ENCODE measurements at regions of chr19 and their contacts with region 1.

Region 1: GRCh38 chr19:41641879-41642485 is 15.1 kb upstream of the CEACAM4 start:
- DNase-seq: peak; percentile 4
- ATAC-seq: peak; percentile 88
- H3K4me3 ChIP-seq: no peak overlapping the region
- H3K27ac ChIP-seq: no peak overlapping the region
- H3K4me1 ChIP-seq: no peaks in the 10 kb centered on the region
- H3K27me3 ChIP-seq: no peaks in the 10 kb centered on the region; a peak in 2 of 4 replicates
- CTCF ChIP-seq: peak; percentile 86 to 94 (median 93)
- EP300 ChIP-seq: no peak
- POLR2A ChIP-seq: no peak
- RAD21 ChIP-seq: peak; percentile 82

Region 2: GRCh38 chr19:41657157-41657556 is 15.2 kb after region 1 on chr19:
- CTCF ChIA-PET with region 1: interaction called, 13 read pairs
- POLR2A ChIA-PET with region 1: no interaction called
- RAD21 ChIA-PET with region 1: interaction called, 8 read pairs
- SMC1A ChIA-PET with region 1: no interaction called
- in situ Hi-C with region 1: no loop called
- intact Hi-C with region 1: no loop called
- DNase-seq: no peak
- ATAC-seq: no peak
- H3K4me3 ChIP-seq: no peak overlapping the region
- H3K27ac ChIP-seq: no peak overlapping the region
- H3K4me1 ChIP-seq: no peaks in the 10 kb centered on the region; the same call in 1 of the 2 replicates
- H3K27me3 ChIP-seq: no peaks in the 10 kb centered on the region
- CTCF ChIP-seq: no peak
- EP300 ChIP-seq: no peak
- POLR2A ChIP-seq: no peak
- RAD21 ChIP-seq: no peak

Region 3: DNA sequence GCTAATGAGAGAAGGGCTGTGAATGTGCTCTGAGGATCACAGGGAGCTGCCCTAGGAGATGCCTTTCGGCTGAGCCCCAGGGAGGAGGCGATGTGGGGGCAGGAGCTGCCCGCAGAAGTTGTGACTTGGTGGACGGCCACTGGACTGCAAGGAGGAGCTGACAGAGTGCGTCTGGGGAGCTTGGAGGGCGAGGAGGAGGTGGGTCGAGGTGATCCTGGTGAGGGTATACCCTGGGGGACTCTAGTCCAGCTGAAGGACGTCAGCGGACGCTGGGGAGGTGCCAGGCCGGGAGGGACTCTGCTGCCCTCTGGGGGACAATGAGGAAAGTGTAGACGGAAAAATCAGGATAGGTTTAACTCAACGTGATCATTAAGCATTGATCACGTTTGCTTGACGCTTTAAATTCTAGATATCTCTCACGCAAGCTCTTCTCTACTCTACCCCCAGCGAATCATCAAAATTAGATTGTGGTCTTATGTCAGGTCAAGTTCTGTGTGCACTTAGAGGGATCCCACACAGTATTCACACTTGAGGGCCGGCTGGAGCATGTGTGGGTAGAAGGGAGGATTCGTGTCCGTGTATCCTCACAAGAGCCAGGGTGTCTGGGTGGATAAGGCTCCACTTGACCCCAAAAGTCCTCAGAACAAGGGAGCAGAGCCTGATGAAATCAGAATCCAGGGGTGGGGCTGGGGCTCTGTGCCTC is 49.4 kb after region 1 on chr19:
- CTCF ChIA-PET with region 1: interaction called, 72 read pairs
- POLR2A ChIA-PET with region 1: no interaction called
- RAD21 ChIA-PET with region 1: interaction called, 9 read pairs
- SMC1A ChIA-PET with region 1: interaction called, 25 read pairs
- in situ Hi-C with region 1: loop called (anchors 5 kb)
- intact Hi-C with region 1: loop called (anchors 2 kb)
- DNase-seq: no peak
- ATAC-seq: peak; percentile 60
- H3K4me3 ChIP-seq: no peak overlapping the region
- H3K27ac ChIP-seq: no peak overlapping the region
- H3K4me1 ChIP-seq: no peaks in the 10 kb centered on the region
- H3K27me3 ChIP-seq: peaks cover 0 to under 1% of the 10 kb centered on the region in 2 experiments; a peak in 2 of 4 replicates
- CTCF ChIP-seq: peak; percentile 59 to 75 (median 72)
- EP300 ChIP-seq: no peak
- POLR2A ChIP-seq: no peak
- RAD21 ChIP-seq: peak; percentile 24; the same call in 1 of the 2 replicates

Region 4: DNA sequence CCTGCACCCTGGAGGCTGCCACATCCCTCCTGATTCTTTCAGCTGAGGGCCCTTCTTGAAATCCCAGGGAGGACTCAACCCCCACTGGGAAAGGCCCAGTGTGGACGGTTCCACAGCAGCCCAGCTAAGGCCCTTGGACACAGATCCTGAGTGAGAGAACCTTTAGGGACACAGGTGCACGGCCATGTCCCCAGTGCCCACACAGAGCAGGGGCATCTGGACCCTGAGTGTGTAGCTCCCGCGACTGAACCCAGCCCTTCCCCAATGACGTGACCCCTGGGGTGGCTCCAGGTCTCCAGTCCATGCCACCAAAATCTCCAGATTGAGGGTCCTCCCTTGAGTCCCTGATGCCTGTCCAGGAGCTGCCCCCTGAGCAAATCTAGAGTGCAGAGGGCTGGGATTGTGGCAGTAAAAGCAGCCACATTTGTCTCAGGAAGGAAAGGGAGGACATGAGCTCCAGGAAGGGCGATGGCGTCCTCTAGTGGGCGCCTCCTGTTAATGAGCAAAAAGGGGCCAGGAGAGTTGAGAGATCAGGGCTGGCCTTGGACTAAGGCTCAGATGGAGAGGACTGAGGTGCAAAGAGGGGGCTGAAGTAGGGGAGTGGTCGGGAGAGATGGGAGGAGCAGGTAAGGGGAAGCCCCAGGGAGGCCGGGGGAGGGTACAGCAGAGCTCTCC is 59.6 kb after region 1 on chr19:
- CTCF ChIA-PET with region 1: interaction called, 37 read pairs
- POLR2A ChIA-PET with region 1: no interaction called
- RAD21 ChIA-PET with region 1: interaction called, 3 read pairs
- SMC1A ChIA-PET with region 1: interaction called, 6 read pairs
- in situ Hi-C with region 1: no loop called
- intact Hi-C with region 1: loop called (anchors 2 kb)
- DNase-seq: no peak
- ATAC-seq: no peak
- H3K4me3 ChIP-seq: no peak overlapping the region
- H3K27ac ChIP-seq: no peak overlapping the region
- H3K4me1 ChIP-seq: no peaks in the 10 kb centered on the region
- H3K27me3 ChIP-seq: peaks cover 2 to 3% of the 10 kb centered on the region in 2 experiments; a peak in 3 of 4 replicates
- CTCF ChIP-seq: peak; percentile 45 to 52 (median 51); a peak in 4 of 6 replicates
- EP300 ChIP-seq: no peak
- POLR2A ChIP-seq: no peak
- RAD21 ChIP-seq: peak; percentile 42

Region 5: GRCh38 chr19:41706741-41707501 is 64.9 kb after region 1 on chr19:
- CTCF ChIA-PET with region 1: interaction called, 37 read pairs
- POLR2A ChIA-PET with region 1: no interaction called
- RAD21 ChIA-PET with region 1: interaction called, 3 read pairs
- SMC1A ChIA-PET with region 1: interaction called, 4 read pairs
- in situ Hi-C with region 1: no loop called
- intact Hi-C with region 1: no loop called
- DNase-seq: peak; percentile 3
- ATAC-seq: peak; percentile 98
- H3K4me3 ChIP-seq: no peak overlapping the region
- H3K27ac ChIP-seq: no peak overlapping the region
- H3K4me1 ChIP-seq: no peaks in the 10 kb centered on the region
- H3K27me3 ChIP-seq: peaks cover 3% of the 10 kb centered on the region in 2 experiments
- CTCF ChIP-seq: peak; percentile 51 to 93 (median 58); a peak in 5 of 6 replicates
- EP300 ChIP-seq: no peak
- POLR2A ChIP-seq: no peak
- RAD21 ChIP-seq: no peak

Region 6: GRCh38 chr19:41746593-41747227 is 104.7 kb after region 1 on chr19:
- CTCF ChIA-PET with region 1: interaction called, 25 read pairs
- POLR2A ChIA-PET with region 1: no interaction called
- RAD21 ChIA-PET with region 1: no interaction called
- SMC1A ChIA-PET with region 1: no interaction called
- in situ Hi-C with region 1: no loop called
- intact Hi-C with region 1: loop called (anchors 2 kb)
- DNase-seq: no peak
- ATAC-seq: peak; percentile 87
- H3K4me3 ChIP-seq: no peak overlapping the region
- H3K27ac ChIP-seq: no peak overlapping the region
- H3K4me1 ChIP-seq: no peaks in the 10 kb centered on the region
- H3K27me3 ChIP-seq: peaks cover 0 to 8% of the 10 kb centered on the region in 2 experiments; a peak in 1 of 4 replicates
- CTCF ChIP-seq: peak; percentile 61 to 65 (median 64)
- EP300 ChIP-seq: no peak
- POLR2A ChIP-seq: no peak
- RAD21 ChIP-seq: peak; percentile 69

Region 7: DNA sequence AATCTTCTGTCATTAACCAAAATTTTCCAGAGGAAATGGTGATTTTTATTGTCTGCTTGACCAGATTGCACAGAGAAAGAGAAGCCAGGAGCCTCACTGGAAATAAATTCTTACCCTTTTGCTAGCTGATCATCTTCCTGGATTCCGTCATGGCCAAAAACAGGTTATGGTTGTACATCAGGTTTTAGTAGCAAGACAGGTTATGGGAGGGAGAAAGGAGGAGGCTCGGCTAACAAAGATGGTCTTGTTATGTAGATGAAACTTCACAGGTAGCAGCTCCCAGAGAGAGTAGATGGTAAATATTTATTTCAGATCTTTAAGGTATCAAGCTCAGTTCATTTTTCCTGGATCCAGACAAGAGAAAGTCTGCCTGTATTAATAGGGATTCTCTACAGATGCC is 134.7 kb after region 1 on chr19:
- CTCF ChIA-PET with region 1: no interaction called
- POLR2A ChIA-PET with region 1: no interaction called
- RAD21 ChIA-PET with region 1: no interaction called
- SMC1A ChIA-PET with region 1: no interaction called
- in situ Hi-C with region 1: no loop called
- intact Hi-C with region 1: no loop called
- DNase-seq: no peak
- ATAC-seq: no peak
- H3K4me3 ChIP-seq: no peak overlapping the region
- H3K27ac ChIP-seq: no peak overlapping the region
- H3K4me1 ChIP-seq: no peaks in the 10 kb centered on the region
- H3K27me3 ChIP-seq: no peaks in the 10 kb centered on the region; a peak in 3 of 4 replicates
- CTCF ChIP-seq: no peak
- EP300 ChIP-seq: no peak
- POLR2A ChIP-seq: no peak
- RAD21 ChIP-seq: no peak

Region 8: GRCh38 chr19:41859618-41860418 is 217.8 kb after region 1 on chr19 and contains the start of gene RPS19:
- CTCF ChIA-PET with region 1: no interaction called
- POLR2A ChIA-PET with region 1: no interaction called
- RAD21 ChIA-PET with region 1: no interaction called
- SMC1A ChIA-PET with region 1: no interaction called
- in situ Hi-C with region 1: no loop called
- intact Hi-C with region 1: no loop called
- DNase-seq: peak; percentile 97
- ATAC-seq: peak; percentile 89
- H3K4me3 ChIP-seq: peak within 1 kb of the TSS; percentile 94
- H3K27ac ChIP-seq: peak within 1 kb of the TSS; percentile 98
- H3K4me1 ChIP-seq: peaks cover 24% of the 10 kb centered on the region
- H3K27me3 ChIP-seq: no peaks in the 10 kb centered on the region
- CTCF ChIP-seq: peak in 2 of 3 experiments; percentile 51 to 62; a peak in 4 of 6 replicates
- EP300 ChIP-seq: no peak
- POLR2A ChIP-seq: peak; percentile 99
- RAD21 ChIP-seq: no peak
- polyA plus RNA-seq, gene RPS19: 5,523 to 5,578 TPM

Measured in GM12878 (cell line).